K562 (cell line): ENCODE measurements at regions of chr18 and their contacts with region 1.

Region 1: DNA sequence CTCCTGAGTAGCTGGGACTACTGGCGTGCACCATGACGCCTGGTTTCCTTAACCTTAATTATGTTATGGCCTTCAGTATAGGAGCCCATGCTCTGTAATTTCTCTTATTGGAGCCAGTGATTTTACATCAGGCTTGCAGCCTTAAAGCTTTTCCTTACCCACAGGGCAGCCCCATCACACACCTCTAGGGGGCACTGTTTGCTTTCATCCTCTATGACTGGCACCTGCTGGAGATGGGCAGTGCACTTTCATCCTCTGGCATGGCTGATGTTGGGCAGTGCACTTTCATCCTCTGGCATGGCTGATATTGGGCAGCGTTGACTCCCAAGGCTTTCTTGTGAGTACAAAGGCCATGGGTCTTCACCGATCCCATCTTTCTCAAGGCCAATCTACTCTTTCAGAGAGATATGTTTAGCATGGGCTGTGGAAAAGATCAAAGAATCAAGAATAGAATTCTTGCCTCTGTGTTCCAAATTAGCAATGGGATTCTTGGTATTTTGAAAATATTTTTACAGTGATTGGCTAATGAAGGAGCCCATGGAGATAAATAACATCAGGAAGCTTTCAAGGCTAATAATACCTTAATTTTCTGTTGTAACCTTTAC is 80.7 kb upstream of the MEX3C start:
- DNase-seq: peak; percentile 32 to 47 (median 43)
- ATAC-seq: peak; percentile 84
- H3K4me3 ChIP-seq: no peak overlapping the region
- H3K27ac ChIP-seq: no peak overlapping the region
- H3K4me1 ChIP-seq: no peaks in the 10 kb centered on the region; a peak in 1 of 5 replicates
- H3K27me3 ChIP-seq: no peaks in the 10 kb centered on the region; a peak in 1 of 5 replicates
- CTCF ChIP-seq: peak; percentile 61 to 62 (median 61)
- EP300 ChIP-seq: no peak
- POLR2A ChIP-seq: no peak
- RAD21 ChIP-seq: peak; percentile 50 to 67

Region 2: GRCh38 chr18:51370996-51371395 is 92.8 kb after region 1 on chr18:
- CTCF ChIA-PET with region 1: no interaction called
- POLR2A ChIA-PET with region 1: no interaction called
- in situ Hi-C with region 1: no loop called
- intact Hi-C with region 1: loop called (anchors 10 kb)
- DNase-seq: peak in 1 of 4 experiments; percentile 8
- ATAC-seq: no peak
- H3K4me3 ChIP-seq: no peak overlapping the region
- H3K27ac ChIP-seq: no peak overlapping the region
- H3K4me1 ChIP-seq: no peaks in the 10 kb centered on the region
- H3K27me3 ChIP-seq: no peaks in the 10 kb centered on the region
- CTCF ChIP-seq: no peak
- EP300 ChIP-seq: no peak
- POLR2A ChIP-seq: no peak
- RAD21 ChIP-seq: no peak

Region 3: DNA sequence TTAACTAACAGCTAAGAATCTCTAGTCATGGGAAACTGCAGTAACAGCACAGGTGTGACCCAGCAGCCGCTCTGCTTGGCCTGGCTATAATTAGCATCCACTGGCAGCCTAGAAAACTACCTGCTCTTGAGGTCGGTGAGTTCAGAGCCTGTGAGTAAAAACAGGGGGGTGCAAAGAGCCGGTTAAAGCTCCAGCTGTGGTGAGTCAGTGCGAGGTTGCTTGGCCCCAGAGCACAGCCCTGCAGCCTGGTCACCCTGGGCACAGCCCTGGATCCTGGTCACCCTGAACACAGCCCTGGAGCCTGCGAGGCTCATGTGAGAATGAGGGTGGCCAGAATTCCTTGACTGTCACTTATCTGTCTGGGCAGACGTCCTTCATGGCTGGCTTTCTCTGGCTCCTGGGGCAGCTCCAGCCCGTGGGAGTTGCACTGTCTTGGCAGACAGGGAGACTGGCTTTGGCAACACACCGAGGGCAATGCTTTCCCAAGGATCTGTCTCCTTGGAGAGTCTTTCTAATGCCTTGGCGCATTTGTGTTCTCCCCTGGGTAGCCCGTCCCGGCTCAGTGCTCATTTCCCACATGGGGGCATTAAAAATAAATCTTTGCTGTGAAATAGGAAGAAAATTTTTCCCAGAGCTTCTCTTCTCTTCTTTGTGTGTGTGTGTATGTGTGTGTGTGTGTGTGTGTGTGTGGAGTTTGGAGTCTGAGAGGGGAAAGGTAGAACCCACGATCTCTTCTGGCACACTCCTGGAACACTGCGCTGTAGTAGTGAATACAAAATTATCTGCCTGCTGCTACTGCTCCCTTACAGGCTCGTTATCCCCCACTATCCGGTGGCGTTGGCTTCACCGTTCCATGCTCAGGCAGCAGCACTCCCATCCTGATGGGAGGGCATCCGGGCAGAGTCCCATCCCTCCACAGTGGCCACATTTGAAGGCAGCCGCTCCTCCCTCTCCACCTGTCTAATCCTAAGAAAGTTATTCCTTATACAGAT is 169.5 kb after region 1 on chr18:
- CTCF ChIA-PET with region 1: no interaction called
- POLR2A ChIA-PET with region 1: no interaction called
- in situ Hi-C with region 1: no loop called
- intact Hi-C with region 1: no loop called
- DNase-seq: no peak
- ATAC-seq: no peak
- H3K4me3 ChIP-seq: no peak overlapping the region
- H3K27ac ChIP-seq: no peak overlapping the region
- H3K4me1 ChIP-seq: no peaks in the 10 kb centered on the region
- H3K27me3 ChIP-seq: no peaks in the 10 kb centered on the region
- CTCF ChIP-seq: no peak
- EP300 ChIP-seq: no peak
- POLR2A ChIP-seq: no peak
- RAD21 ChIP-seq: no peak